ENCODE measurements at regions of chr17 and their contacts with region 1.

Region 1: GRCh38 chr17:47949136-47949759 is 7.9 kb downstream of the PNPO start:
- DNase-seq: peak; percentile 99
- H3K4me3 Mint-ChIP-seq: peak overlapping the region; percentile 17
- H3K27ac Mint-ChIP-seq: peak overlapping the region; percentile 21
- H3K4me1 Mint-ChIP-seq: peaks cover 80% of the 10 kb centered on the region
- H3K27me3 Mint-ChIP-seq: no peaks in the 10 kb centered on the region
- CTCF ChIP-seq: peak; percentile 98

Region 2: GRCh38 chr17:47895856-47896671 is 53.2 kb before region 1 on chr17 and contains the start of gene SP2:
- CTCF ChIA-PET with region 1: interaction called, 7 read pairs
- intact Hi-C with region 1: loop called (anchors 5 kb)
- DNase-seq: peak; percentile 100
- H3K4me3 Mint-ChIP-seq: peak within 1 kb of the TSS; percentile 82
- H3K27ac Mint-ChIP-seq: peak within 1 kb of the TSS; percentile 99
- H3K4me1 Mint-ChIP-seq: peaks cover 24% of the 10 kb centered on the region
- H3K27me3 Mint-ChIP-seq: peaks cover 12% of the 10 kb centered on the region
- CTCF ChIP-seq: no peak
- total RNA-seq, gene SP2: 21.5 and 22.4 TPM in 2 replicates

Region 3: GRCh38 chr17:47935961-47936360 is 13.3 kb before region 1 on chr17:
- CTCF ChIA-PET with region 1: interaction called, 19 read pairs
- intact Hi-C with region 1: no loop called
- DNase-seq: peak; percentile 54
- H3K4me3 Mint-ChIP-seq: no peak overlapping the region
- H3K27ac Mint-ChIP-seq: no peak overlapping the region
- H3K4me1 Mint-ChIP-seq: peaks cover 28% of the 10 kb centered on the region
- H3K27me3 Mint-ChIP-seq: no peaks in the 10 kb centered on the region
- CTCF ChIP-seq: no peak

Region 4: DNA sequence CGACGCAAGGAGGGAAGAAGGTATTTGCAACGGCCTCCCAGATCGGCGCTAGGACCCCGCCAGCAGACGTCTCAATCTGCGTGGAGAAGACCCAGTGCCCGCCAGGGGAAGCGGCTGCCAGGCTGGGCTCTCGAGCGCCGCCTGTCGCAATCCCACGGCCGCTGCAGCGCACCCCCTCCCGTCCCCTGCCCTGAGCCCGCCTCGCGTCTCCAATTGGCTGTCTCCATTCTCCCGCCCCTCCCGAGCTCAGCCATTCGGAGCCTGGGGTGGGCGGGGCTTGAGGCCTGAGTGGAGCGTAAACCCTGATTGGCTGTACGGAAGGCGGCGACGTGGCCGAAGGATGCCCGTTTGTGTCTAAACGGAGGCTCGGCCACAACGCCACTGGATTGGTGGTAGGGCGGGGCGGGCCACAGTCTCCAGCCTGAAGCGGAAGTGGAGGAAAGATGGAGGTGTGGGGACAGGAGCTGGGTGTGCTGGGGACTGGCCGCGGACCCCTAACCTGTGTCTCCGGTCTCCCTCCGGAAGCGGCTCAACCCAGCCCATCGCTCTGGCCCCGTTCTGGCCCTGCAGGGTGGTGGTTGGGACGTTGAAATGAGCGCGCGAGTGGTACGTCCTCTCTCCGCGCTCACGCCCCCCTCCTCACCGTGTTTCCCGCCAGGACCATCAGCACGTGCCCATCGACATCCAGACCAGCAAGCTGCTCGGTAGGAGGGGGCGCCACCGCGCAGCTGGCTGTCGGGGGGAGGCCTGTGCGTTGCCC is 21.6 kb after region 1 on chr17 and contains the start of gene CDK5RAP3:
- CTCF ChIA-PET with region 1: interaction called, 140 read pairs
- intact Hi-C with region 1: loop called (anchors 1 kb)
- DNase-seq: peak; percentile 100
- H3K4me3 Mint-ChIP-seq: peak within 1 kb of the TSS; percentile 94
- H3K27ac Mint-ChIP-seq: peak within 1 kb of the TSS; percentile 19
- H3K4me1 Mint-ChIP-seq: peaks cover 32% of the 10 kb centered on the region
- H3K27me3 Mint-ChIP-seq: no peaks in the 10 kb centered on the region
- CTCF ChIP-seq: peak; percentile 100
- total RNA-seq, gene CDK5RAP3: 431 and 457 TPM in 2 replicates

Region 5: DNA sequence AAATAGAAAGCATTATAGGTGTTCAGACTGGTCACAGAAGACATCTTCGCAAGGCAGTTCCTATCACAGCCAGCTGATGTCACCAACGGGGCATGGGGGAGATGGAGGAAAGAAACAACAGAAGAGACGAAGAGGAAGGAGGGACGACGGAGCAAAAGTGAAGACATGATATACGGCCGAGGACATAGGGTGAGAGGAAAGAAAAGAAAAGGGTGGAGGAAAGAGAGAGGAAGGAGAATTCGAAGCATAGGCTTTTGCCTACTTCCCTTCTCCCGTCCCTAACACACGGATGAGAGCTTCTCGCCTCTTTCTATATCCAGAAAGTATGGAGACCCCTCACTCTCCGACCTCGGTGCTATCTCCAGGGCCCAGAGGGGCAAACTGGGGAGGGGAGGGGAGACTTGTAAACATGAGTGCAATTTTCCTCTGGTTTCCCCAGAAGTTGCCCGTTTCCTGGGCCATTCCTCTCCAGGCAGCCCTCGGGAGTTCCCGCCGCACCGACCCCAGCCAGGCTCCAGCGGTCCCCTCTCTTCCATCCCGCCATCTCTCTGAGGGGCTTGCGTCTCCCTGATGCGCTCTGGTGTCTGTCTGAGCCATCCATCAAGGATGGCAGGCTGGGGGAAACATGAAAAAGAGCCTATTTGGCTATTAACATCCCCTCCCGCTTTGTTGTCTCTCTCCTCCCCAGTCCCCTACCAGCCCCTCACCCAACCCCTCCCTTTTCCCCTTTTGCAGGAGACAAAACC is 62.3 kb after region 1 on chr17:
- CTCF ChIA-PET with region 1: interaction called, 10 read pairs
- intact Hi-C with region 1: no loop called
- DNase-seq: peak; percentile 74
- H3K4me3 Mint-ChIP-seq: peak overlapping the region; percentile 74
- H3K27ac Mint-ChIP-seq: peak overlapping the region; percentile 63
- H3K4me1 Mint-ChIP-seq: peaks cover 17% of the 10 kb centered on the region
- H3K27me3 Mint-ChIP-seq: peaks cover 48% of the 10 kb centered on the region
- CTCF ChIP-seq: peak; percentile 86

Measured in Calu3 (cell line).